Heart right ventricle (tissue), 16 donors: ENCODE measurements at regions of chr9 and their contacts with region 1.

Region 1: GRCh38 chr9:134067904-134068743 is at the start of gene BRD3:
- DNase-seq: peak; percentile 83 to 86
- ATAC-seq: peak; percentile 84 to 94 (median 92)
- H3K4me3 ChIP-seq: peak within 1 kb of the TSS; percentile 70 to 98 (median 84)
- H3K27ac ChIP-seq: peak within 1 kb of the TSS; percentile 92 to 100 (median 98)
- H3K4me1 ChIP-seq: peaks cover 4 to 46% (median 37%) of the 10 kb centered on the region in 9 donors
- H3K27me3 ChIP-seq: peaks cover 0 to 14% (median 0%) of the 10 kb centered on the region in 7 donors
- CTCF ChIP-seq: peak in 1 of 9 donors; percentile 12
- total RNA-seq, gene BRD3: 23.2 to 34.4 (median 29.7) TPM

Region 2: DNA sequence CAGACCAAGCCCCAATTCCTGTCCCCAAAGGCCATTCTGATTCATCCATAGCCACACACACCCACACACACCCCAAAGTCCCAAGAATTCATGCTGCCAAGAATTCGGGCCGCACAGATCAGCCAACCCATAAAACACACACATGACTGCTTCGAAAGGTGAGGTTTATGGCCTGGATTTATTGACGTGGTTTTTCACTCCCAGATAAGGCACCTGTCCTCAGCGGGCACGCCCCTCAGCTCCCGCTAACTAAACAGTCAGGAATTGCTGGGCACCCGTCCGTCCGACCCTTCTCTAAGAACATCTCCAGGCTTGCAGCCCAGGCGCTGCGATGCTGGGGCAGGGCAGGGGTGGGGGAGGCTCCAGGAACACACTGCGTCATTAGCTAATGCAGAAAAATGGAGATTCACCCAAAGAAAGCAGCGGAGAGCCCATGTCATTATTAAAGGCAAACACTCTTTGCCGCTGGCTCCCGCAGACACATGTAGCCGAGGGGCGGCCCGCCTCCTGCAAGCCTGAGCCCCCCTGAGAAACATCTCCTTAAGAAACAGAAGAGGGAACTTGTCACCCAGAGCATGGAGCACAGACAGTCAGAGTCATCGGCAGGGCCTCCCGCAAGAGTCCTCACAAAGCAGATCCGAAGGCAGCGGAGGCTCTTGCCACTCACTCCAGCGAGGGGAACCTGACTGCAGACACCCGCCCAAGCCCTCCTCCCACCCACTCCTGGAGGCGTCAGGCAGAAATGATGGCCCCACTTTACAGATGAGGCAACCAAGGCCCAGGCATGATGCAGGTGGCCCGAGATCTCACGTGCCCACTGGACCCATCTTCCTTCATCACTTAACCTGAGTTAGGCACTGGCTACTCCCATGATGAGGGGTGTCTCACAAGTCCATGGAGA is 95.8 kb before region 1 on chr9:
- intact Hi-C with region 1: no loop called
- DNase-seq: peak in 1 of 2 donors; percentile 7
- ATAC-seq: no peak
- H3K4me3 ChIP-seq: no peak overlapping the region
- H3K27ac ChIP-seq: no peak overlapping the region
- H3K4me1 ChIP-seq: peaks cover 0 to 19% (median 0%) of the 10 kb centered on the region in 9 donors
- H3K27me3 ChIP-seq: no peaks in the 10 kb centered on the region
- CTCF ChIP-seq: no peak

Region 3: DNA sequence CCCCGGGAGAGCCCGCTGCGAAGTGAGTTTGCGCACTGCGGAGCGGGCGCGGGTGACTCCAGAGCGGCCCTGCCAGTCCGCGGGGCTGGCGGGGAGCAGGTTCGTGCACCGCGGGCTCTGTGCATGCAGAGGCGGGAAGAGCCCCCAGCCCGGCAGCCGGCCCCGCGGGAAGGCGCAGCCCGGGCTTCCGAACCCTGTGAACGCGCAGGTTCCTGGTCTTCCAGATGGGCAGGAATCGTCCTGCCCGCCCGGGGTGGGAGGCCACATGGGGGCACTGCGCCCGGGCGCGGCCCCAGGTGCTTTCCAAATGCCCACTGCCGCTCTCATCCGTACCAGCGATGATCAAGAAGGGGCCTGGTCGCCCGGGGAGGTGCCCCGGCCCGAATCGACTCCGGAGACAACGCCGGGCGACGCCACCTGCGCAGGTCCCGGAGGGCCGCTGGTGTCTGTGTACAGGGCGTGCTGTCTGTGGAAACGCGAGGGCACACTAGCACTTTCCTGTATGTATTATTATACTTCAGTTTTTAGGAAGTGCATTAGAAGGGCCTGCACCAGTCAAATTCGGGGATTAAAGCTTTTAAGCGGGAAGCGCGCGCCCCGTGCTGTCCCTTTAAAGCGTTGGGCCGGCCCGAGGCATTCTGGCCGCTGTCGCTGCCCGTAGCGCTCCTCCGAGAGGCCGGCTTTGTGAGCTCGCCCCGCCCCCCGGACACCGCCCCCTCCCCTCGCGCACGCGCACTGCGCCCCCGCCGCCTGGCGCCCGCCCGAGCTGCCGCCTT is 67.4 kb after region 1 on chr9 and contains the start of gene WDR5:
- intact Hi-C with region 1: loop called in 5 of 10 experiments (anchors 1 to 5 kb)
- DNase-seq: peak; percentile 94 to 97
- ATAC-seq: peak; percentile 82 to 95 (median 88)
- H3K4me3 ChIP-seq: peak within 1 kb of the TSS; percentile 74 to 100 (median 92)
- H3K27ac ChIP-seq: peak within 1 kb of the TSS; percentile 84 to 94 (median 93)
- H3K4me1 ChIP-seq: peaks cover 19 to 62% (median 40%) of the 10 kb centered on the region in 9 donors
- H3K27me3 ChIP-seq: no peaks in the 10 kb centered on the region
- CTCF ChIP-seq: peak in 5 of 9 donors; percentile 21 to 53 (median 46)
- total RNA-seq, gene WDR5: 16.1 to 22.5 (median 18.1) TPM